ENCODE measurements at regions of chr1 and their contacts with region 1.

Region 1: DNA sequence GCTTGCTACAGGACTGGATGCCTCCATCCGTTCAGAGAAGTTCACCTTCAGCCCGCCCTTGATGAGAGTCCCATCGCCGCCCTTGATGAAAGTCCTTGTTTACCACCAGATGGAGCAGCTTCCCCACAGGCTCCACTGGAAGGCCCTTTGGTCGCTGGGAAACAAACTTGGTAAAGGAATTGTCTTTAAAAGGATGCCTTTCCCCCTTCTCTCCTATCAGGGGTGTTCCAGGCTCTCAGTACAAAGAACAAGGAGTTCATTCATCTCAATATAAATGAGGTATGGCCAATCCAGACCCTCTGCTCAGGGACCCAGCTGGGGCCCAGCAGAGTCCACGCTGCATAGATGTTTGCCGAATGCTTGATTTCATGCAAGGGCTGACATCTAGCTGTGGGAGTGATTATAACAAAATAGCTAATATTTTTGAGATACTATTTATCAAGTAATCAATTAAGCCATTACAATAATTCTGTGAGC is 50.8 kb downstream of the CAPN9 start:
- DNase-seq: peak; percentile 52
- H3K4me3 ChIP-seq: no peak overlapping the region
- H3K27ac ChIP-seq: no peak overlapping the region
- H3K27me3 ChIP-seq: peaks cover 4% of the 10 kb centered on the region
- CTCF ChIP-seq: peak; percentile 90

Region 2: DNA sequence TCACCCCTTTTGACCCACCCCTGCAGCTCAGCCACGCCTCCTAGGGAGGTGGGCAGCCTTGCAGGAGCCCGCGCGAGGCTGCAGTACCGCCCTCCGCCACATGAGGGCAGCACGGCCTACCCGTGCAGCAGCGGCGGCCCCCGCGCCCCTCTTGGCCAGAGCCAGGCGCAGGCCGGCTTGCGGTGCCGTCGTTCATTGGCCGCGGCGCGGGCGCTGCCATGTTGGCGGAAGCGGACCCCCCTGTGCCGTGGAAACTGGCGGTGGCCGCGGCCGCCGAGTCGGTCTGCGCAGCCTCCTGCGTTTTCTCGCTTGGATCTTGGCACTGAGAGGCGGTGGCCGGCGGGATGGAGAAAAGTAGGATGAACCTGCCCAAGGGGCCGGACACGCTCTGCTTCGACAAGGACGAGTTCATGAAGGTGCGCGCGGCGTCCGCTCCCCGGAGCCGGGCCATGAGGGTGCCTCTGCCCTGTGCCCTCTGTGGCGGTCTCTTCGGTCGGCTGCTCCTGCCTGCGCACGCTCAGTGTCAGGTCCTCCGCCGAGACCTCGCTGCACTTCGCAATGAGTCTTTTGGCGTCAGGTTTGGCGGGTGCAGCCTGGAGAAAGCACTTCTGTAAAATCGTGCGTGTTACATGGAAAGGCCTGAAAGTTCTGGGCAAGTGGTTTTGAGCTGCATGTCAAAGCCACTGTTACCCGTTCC is 155.6 kb before region 1 on chr1 and contains the start of gene COG2:
- CTCF ChIA-PET with region 1: interaction called, 16 read pairs
- POLR2A ChIA-PET with region 1: no interaction called
- DNase-seq: peak; percentile 85
- H3K4me3 ChIP-seq: peak within 1 kb of the TSS; percentile 96
- H3K27ac ChIP-seq: peak within 1 kb of the TSS; percentile 73
- H3K27me3 ChIP-seq: peaks cover 10% of the 10 kb centered on the region
- CTCF ChIP-seq: peak; percentile 94
- polyA plus RNA-seq, gene COG2: 16.7 and 21.5 TPM in 2 replicates

Region 3: DNA sequence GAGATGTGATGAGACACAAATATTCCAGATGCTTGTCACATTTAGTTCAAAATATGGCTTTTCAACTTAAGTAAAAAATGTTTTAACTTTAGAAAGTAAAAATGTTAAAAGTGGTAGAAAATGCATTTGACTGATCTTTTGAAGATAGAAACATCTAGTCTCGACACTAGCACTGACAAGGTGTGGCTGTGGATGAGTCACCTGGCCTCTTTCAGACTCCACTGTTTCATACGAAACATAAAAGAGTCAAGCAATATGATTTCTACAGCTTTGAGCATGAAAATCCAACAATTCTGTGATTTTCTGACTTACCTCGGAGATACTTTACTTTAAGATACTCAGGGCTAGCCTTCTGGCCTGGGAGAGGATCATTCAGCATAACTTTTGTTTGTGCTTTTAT is 133.0 kb after region 1 on chr1:
- CTCF ChIA-PET with region 1: interaction called, 14 read pairs
- POLR2A ChIA-PET with region 1: no interaction called
- DNase-seq: no peak
- H3K4me3 ChIP-seq: no peak overlapping the region
- H3K27ac ChIP-seq: no peak overlapping the region
- H3K27me3 ChIP-seq: no peaks in the 10 kb centered on the region
- CTCF ChIP-seq: no peak

Region 4: DNA sequence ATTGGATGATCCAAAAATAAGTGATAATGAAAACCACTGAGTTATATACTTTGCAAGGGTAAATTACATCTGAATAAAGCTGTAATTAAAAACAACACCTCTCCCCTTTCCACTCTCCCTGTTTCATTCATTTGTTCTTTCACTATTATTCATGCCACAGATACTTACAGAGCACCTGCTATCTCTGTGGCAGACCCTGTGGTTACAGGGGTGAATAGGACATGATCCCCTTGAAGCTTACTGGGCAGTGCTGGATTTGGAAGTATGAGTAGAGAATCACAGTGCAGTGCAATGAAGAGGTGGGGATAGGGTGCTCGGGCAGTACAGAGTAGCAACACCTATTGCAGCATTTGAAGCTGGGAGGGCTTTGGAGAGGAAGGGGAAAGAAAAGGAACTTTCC is 202.7 kb after region 1 on chr1:
- CTCF ChIA-PET with region 1: no interaction called
- POLR2A ChIA-PET with region 1: no interaction called
- DNase-seq: no peak
- H3K4me3 ChIP-seq: no peak overlapping the region
- H3K27ac ChIP-seq: no peak overlapping the region
- H3K27me3 ChIP-seq: no peaks in the 10 kb centered on the region
- CTCF ChIP-seq: no peak

Region 5: DNA sequence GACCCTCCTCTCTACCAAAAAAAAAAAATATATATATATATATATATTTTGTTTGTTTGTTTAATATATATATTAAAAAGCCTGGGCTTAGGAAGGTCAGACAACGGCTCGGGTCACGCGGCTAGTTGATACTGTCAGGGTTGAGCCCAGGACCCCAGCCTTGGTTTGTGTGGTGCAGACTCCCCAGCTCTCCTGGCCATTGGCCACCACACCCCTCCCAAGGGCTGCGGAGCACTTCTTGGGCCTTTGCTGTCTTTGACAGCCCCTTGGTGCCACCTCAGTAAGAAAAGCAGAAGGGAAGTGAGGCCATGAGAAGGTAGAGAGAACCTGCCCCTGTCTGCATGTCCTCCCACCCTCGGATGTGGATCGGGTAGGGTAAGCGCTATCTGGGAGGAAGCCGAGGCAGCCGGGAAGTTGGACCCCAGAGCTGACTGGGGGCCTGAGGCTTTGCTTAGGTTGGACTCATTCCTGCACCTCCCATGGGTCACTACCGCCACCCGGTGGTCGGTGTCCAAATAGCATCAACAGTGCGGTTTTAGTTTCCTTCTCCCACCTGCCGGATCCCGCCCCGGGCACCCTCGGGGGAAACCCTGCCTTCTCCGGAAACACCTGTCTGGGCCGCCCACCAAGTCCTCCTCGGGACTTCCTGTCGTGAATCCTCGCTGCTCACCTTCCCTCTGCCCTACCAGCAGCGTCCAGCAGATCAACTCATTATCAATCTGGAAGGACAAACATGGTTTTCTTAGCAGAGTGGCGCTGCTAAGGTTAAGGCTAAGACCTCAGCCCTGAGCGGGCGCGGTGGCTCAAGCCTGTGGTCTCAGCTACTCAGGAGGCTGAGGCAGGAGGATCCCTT is 413.3 kb after region 1 on chr1:
- CTCF ChIA-PET with region 1: interaction called, 40 read pairs
- POLR2A ChIA-PET with region 1: no interaction called
- DNase-seq: peak; percentile 27
- H3K4me3 ChIP-seq: peak overlapping the region; percentile 61
- H3K27ac ChIP-seq: no peak overlapping the region
- H3K27me3 ChIP-seq: peaks cover 21% of the 10 kb centered on the region
- CTCF ChIP-seq: peak; percentile 94

Measured in AG04450 (cell line).